ENCODE measurements at regions of chr11 and their contacts with region 1.

Region 1: GRCh38 chr11:63478896-63479295 is 12.1 kb downstream of the PLAAT5 start:
- DNase-seq: peak; percentile 74 to 80
- H3K4me3 ChIP-seq: no peak overlapping the region
- H3K4me3 Mint-ChIP-seq: no peak overlapping the region
- H3K27ac Mint-ChIP-seq: no peak overlapping the region
- H3K4me1 ChIP-seq: peaks cover 12% of the 10 kb centered on the region; the same call in 1 of the 2 replicates
- H3K4me1 Mint-ChIP-seq: no peaks in the 10 kb centered on the region
- H3K27me3 ChIP-seq: no peaks in the 10 kb centered on the region
- H3K27me3 Mint-ChIP-seq: no peaks in the 10 kb centered on the region
- CTCF ChIP-seq: peak; percentile 94

Region 2: GRCh38 chr11:62889484-62890437 is 589.1 kb before region 1 on chr11:
- CTCF ChIA-PET with region 1: no interaction called
- POLR2A ChIA-PET with region 1: interaction called, 11 read pairs
- intact Hi-C with region 1: no loop called
- DNase-seq: peak; percentile 90 to 97
- H3K4me3 ChIP-seq: no peak overlapping the region
- H3K4me3 Mint-ChIP-seq: peak overlapping the region; percentile 64
- H3K27ac Mint-ChIP-seq: peak overlapping the region; percentile 83
- H3K4me1 ChIP-seq: peaks cover 70% of the 10 kb centered on the region
- H3K4me1 Mint-ChIP-seq: peaks cover 59% of the 10 kb centered on the region
- H3K27me3 ChIP-seq: no peaks in the 10 kb centered on the region
- H3K27me3 Mint-ChIP-seq: no peaks in the 10 kb centered on the region
- CTCF ChIP-seq: no peak

Region 3: GRCh38 chr11:63490551-63491239 is 11.8 kb after region 1 on chr11 and contains the start of gene PLAAT5:
- CTCF ChIA-PET with region 1: interaction called, 11 read pairs
- POLR2A ChIA-PET with region 1: interaction called, 3 read pairs
- intact Hi-C with region 1: loop called (anchors 1 kb)
- DNase-seq: peak in 1 of 2 experiments; percentile 29
- H3K4me3 ChIP-seq: peak within 1 kb of the TSS; percentile 36
- H3K4me3 Mint-ChIP-seq: peak within 1 kb of the TSS; percentile 78
- H3K27ac Mint-ChIP-seq: peak within 1 kb of the TSS; percentile 89
- H3K4me1 ChIP-seq: peaks cover 18% of the 10 kb centered on the region
- H3K4me1 Mint-ChIP-seq: peaks cover 18% of the 10 kb centered on the region
- H3K27me3 ChIP-seq: no peaks in the 10 kb centered on the region
- H3K27me3 Mint-ChIP-seq: no peaks in the 10 kb centered on the region
- CTCF ChIP-seq: no peak
- total RNA-seq, gene PLAAT5: 1.2 and 2.3 TPM in 2 replicates

Region 4: GRCh38 chr11:63508009-63508408 is 29.1 kb after region 1 on chr11:
- CTCF ChIA-PET with region 1: interaction called, 21 read pairs
- POLR2A ChIA-PET with region 1: interaction called, 3 read pairs
- intact Hi-C with region 1: loop called (anchors 1 kb)
- DNase-seq: peak; percentile 77 to 82
- H3K4me3 ChIP-seq: no peak overlapping the region
- H3K4me3 Mint-ChIP-seq: no peak overlapping the region
- H3K27ac Mint-ChIP-seq: no peak overlapping the region
- H3K4me1 ChIP-seq: peaks cover 7% of the 10 kb centered on the region
- H3K4me1 Mint-ChIP-seq: no peaks in the 10 kb centered on the region
- H3K27me3 ChIP-seq: no peaks in the 10 kb centered on the region
- H3K27me3 Mint-ChIP-seq: no peaks in the 10 kb centered on the region
- CTCF ChIP-seq: peak; percentile 62 to 92

Region 5: DNA sequence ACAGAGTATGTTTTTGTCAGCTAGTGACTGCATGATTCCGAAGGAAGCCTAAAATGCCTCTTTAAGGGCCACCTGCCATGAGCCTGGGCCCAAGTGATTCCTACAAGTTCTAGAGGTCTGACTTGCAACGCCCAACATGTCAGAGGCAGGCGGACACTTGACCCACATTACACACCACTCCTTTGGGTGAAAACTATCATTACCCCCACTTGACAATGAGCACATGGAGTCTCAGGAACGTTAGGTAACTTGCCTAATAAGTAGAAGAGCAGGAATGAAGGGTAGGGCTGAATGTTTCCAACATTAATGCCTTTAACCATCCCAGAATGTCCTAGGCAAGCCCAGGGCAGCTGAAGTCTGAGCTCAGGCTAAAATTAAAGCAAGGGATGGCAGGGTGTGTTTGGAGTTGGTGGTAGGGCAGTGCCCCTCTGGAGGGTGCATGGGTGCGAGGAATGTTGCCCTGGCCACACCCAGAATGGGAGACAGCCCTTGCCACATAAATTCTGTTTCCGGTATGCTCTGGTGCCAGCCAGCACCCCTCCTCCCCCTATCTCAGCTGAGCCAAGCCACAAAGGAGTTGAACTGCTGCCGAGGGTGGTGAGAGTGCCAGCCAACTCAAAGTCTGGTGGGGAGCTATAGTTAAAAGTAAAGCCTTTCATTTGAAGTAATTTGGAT is 81.7 kb after region 1 on chr11:
- CTCF ChIA-PET with region 1: no interaction called
- POLR2A ChIA-PET with region 1: no interaction called
- intact Hi-C with region 1: no loop called
- DNase-seq: no peak
- H3K4me3 ChIP-seq: no peak overlapping the region
- H3K4me3 Mint-ChIP-seq: no peak overlapping the region
- H3K27ac Mint-ChIP-seq: no peak overlapping the region
- H3K4me1 ChIP-seq: peaks cover 21% of the 10 kb centered on the region
- H3K4me1 Mint-ChIP-seq: peaks cover 14% of the 10 kb centered on the region
- H3K27me3 ChIP-seq: no peaks in the 10 kb centered on the region
- H3K27me3 Mint-ChIP-seq: no peaks in the 10 kb centered on the region
- CTCF ChIP-seq: no peak

Region 6: GRCh38 chr11:63573881-63574855 is 95.3 kb after region 1 on chr11:
- CTCF ChIA-PET with region 1: interaction called, 3 read pairs
- POLR2A ChIA-PET with region 1: no interaction called
- intact Hi-C with region 1: loop called (anchors 1 kb)
- DNase-seq: peak; percentile 77 to 87
- H3K4me3 ChIP-seq: peak overlapping the region; percentile 22
- H3K4me3 Mint-ChIP-seq: peak overlapping the region; percentile 79
- H3K27ac Mint-ChIP-seq: peak overlapping the region; percentile 92
- H3K4me1 ChIP-seq: peaks cover 23% of the 10 kb centered on the region
- H3K4me1 Mint-ChIP-seq: peaks cover 41% of the 10 kb centered on the region
- H3K27me3 ChIP-seq: no peaks in the 10 kb centered on the region
- H3K27me3 Mint-ChIP-seq: no peaks in the 10 kb centered on the region
- CTCF ChIP-seq: peak in 1 of 2 experiments; percentile 29

Region 7: GRCh38 chr11:63592975-63593395 is 114.1 kb after region 1 on chr11:
- CTCF ChIA-PET with region 1: no interaction called
- POLR2A ChIA-PET with region 1: no interaction called
- intact Hi-C with region 1: loop called (anchors 1 kb)
- DNase-seq: peak in 1 of 2 experiments; percentile 67
- H3K4me3 ChIP-seq: no peak overlapping the region
- H3K4me3 Mint-ChIP-seq: no peak overlapping the region
- H3K27ac Mint-ChIP-seq: no peak overlapping the region
- H3K4me1 ChIP-seq: no peaks in the 10 kb centered on the region
- H3K4me1 Mint-ChIP-seq: peaks cover 7% of the 10 kb centered on the region
- H3K27me3 ChIP-seq: no peaks in the 10 kb centered on the region
- H3K27me3 Mint-ChIP-seq: no peaks in the 10 kb centered on the region
- CTCF ChIP-seq: peak; percentile 72 to 95

Region 8: GRCh38 chr11:63635762-63636465 is 157.0 kb after region 1 on chr11:
- CTCF ChIA-PET with region 1: interaction called, 17 read pairs
- POLR2A ChIA-PET with region 1: no interaction called
- intact Hi-C with region 1: loop called (anchors 1 kb)
- DNase-seq: peak; percentile 72 to 82
- H3K4me3 ChIP-seq: no peak overlapping the region
- H3K4me3 Mint-ChIP-seq: no peak overlapping the region
- H3K27ac Mint-ChIP-seq: no peak overlapping the region
- H3K4me1 ChIP-seq: peaks cover 14% of the 10 kb centered on the region; the same call in 1 of the 2 replicates
- H3K4me1 Mint-ChIP-seq: peaks cover 16% of the 10 kb centered on the region
- H3K27me3 ChIP-seq: no peaks in the 10 kb centered on the region
- H3K27me3 Mint-ChIP-seq: no peaks in the 10 kb centered on the region
- CTCF ChIP-seq: peak; percentile 84 to 85

Measured in Caco-2 (cell line).